Posterior vena cava (tissue), 2 donors: ENCODE measurements at regions of chr2 and their contacts with region 1.

Region 1: DNA sequence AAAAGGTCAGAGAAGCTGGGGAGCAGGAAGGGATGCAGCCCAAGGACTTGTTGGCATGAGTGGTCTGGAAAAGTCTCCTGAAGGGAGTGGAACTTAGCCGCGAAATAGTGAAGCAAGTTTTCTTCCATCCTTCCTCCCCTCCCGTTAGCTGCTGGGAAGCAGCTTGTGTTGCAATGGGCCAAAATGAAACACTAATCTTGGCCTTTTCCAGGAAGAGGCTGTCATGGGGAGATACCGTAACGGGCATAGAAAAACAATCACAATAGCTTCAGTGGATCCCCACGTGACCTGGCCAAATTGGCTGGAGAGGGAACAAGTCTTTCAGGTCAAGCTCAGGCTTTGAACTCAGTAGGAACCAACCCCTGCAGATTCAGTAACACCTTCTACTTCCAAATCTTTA is 49.3 kb downstream of the SEMA4F start:
- DNase-seq: no peak

Region 2: DNA sequence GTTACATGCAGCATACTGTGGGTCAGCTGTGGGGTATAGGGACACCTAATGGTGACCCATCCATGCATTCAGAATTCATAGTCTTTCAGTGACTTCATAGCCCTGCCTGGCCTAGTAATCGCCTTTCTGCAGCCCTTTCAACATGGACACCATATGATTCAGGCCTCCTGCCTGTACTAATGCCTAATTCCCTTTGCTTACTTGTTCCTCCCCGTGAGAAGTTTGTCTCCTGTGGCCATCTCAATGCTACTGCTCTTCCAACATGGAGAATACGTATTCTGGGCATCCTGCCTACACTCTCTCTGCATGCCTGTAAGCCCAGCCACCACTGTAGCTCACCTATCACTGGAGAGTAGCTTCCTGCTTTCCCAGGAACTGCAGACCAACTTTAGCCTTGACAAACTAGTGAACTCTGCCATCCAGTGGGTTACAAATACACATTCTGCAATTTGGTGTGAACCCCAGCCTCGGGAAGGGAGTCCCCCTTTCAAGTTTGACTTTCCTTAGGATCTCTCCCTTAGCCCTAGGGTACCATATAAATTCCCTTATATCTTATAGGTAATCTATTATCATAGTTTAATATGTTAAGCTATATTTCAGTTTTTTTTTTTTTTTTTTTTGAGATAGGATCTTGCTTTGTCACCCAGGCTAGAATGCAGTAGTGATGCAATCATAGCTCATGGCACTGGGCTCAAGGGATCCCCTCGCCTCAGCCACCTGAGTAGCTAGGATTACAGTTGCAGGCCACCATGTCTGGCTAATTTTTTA is 77.5 kb before region 1 on chr2:
- intact Hi-C with region 1: loop called in 1 of 2 experiments (anchors 2 kb)
- DNase-seq: no peak

Region 3: DNA sequence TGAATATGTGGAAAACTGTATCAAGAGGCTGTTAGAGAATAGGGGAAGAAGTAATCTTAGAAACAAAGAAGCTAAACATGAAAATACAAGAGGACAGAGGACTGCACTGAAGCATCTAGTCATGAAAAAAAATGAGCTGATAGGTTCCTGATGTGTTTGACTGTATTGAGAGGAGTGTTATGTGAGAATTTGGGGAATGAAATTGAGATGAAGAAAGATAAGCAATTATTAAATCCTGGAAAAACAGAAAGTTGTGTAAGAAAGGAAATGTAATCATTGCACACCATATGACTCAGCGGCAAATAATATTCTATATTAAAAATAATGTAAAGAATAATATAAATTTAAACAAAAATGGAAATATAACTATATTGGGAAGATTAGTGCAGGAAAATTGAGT is 21.9 kb after region 1 on chr2:
- intact Hi-C with region 1: no loop called
- DNase-seq: no peak

Region 4: GRCh38 chr2:75108937-75109482 is 405.6 kb after region 1 on chr2:
- intact Hi-C with region 1: no loop called
- DNase-seq: no peak